Naive thymus-derived CD4-positive, alpha-beta T cell (primary cell): ENCODE measurements at regions of chr10 and their contacts with region 1.

Region 1: DNA sequence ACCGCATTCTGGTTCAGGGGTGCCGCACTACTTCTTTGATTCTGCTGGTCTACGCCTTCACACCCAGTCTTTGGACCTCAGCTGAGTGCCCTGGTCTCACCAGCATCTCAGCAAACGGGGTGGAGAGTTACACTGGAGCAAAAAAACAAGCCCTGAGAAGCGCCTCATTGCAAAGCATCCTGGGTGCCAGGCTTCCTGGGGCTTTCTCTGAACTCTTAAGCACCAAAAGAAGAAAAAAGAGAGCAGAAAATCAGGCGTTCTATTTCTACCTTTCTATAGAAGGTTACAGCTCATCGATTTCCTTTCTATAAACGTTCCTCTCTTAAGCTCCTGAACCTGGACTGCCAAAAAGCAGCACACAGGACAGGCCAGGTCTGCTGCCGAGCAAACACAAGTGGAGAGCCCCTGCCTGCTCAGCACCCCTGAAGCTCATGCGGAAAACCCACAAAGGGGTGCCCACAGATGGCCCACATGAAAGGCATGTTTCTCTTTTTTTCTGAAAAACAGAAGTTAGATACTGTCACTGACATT is 217.9 kb downstream of the SFMBT2 start:
- DNase-seq: peak; percentile 30 to 85 (median 80)
- ATAC-seq: peak; percentile 95
- H3K4me3 ChIP-seq: peak overlapping the region; percentile 29
- H3K4me3 Mint-ChIP-seq: peak overlapping the region; percentile 67 to 89 (median 87)
- H3K27ac ChIP-seq: peak overlapping the region; percentile 66
- H3K27ac Mint-ChIP-seq: peak overlapping the region; percentile 93 to 98 (median 97)
- H3K4me1 ChIP-seq: peaks cover 24 to 80% of the 10 kb centered on the region in 2 donors
- H3K4me1 Mint-ChIP-seq: peaks cover 46 to 88% (median 75%) of the 10 kb centered on the region in 7 donors
- H3K27me3 ChIP-seq: no peaks in the 10 kb centered on the region
- H3K27me3 Mint-ChIP-seq: no peaks in the 10 kb centered on the region

Region 2: DNA sequence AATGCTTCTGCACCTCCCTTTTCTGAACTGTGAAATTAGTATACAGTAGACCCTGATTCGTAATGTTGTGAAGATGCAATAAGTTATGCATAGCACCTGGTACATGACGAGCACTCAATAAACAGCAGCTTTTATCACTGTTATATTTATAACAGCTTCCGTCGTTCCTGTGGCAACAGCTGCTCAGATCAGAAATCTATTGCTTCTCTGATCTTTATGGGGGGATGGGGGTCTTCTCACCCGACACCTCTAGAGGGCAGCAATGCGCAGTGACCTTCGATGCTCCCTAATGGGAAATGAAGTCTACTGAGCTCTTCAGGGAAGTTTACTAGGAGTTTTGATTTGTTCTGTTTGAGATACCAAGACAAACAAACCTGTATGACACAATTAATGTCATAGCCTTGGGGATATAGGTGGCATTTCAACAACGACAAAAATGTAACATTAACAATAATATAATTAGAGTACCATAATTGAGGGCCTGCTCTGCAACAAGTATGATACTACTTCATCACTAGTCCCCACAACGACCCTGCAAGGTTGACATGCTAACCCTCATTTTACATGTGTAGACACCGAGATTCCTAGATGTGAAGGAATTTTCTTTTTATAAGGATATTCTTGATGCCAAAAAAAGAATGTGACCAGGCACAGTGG is 71.6 kb before region 1 on chr10:
- CTCF ChIA-PET with region 1: interaction called, 6 read pairs
- POLR2A ChIA-PET with region 1: no interaction called
- intact Hi-C with region 1: loop called (anchors 1 kb)
- DNase-seq: peak; percentile 54 to 86 (median 79)
- ATAC-seq: peak; percentile 97
- H3K4me3 ChIP-seq: no peak overlapping the region
- H3K4me3 Mint-ChIP-seq: peak overlapping the region in 1 of 10 donors; percentile 42
- H3K27ac ChIP-seq: no peak overlapping the region
- H3K27ac Mint-ChIP-seq: peak overlapping the region; percentile 36 to 97 (median 85)
- H3K4me1 ChIP-seq: no peaks in the 10 kb centered on the region
- H3K4me1 Mint-ChIP-seq: peaks cover 6 to 13% (median 8%) of the 10 kb centered on the region in 7 donors
- H3K27me3 ChIP-seq: no peaks in the 10 kb centered on the region
- H3K27me3 Mint-ChIP-seq: peaks cover 0 to 44% (median 0%) of the 10 kb centered on the region in 5 donors

Region 3: GRCh38 chr10:7173948-7174347 is 18.9 kb before region 1 on chr10:
- CTCF ChIA-PET with region 1: no interaction called
- POLR2A ChIA-PET with region 1: no interaction called
- intact Hi-C with region 1: no loop called
- DNase-seq: no peak
- ATAC-seq: no peak
- H3K4me3 ChIP-seq: no peak overlapping the region
- H3K4me3 Mint-ChIP-seq: no peak overlapping the region
- H3K27ac ChIP-seq: no peak overlapping the region
- H3K27ac Mint-ChIP-seq: no peak overlapping the region
- H3K4me1 ChIP-seq: no peaks in the 10 kb centered on the region
- H3K4me1 Mint-ChIP-seq: peaks cover 0 to 4% (median 0%) of the 10 kb centered on the region in 7 donors
- H3K27me3 ChIP-seq: no peaks in the 10 kb centered on the region
- H3K27me3 Mint-ChIP-seq: no peaks in the 10 kb centered on the region

Region 4: GRCh38 chr10:7205656-7206055 is 12.8 kb after region 1 on chr10:
- CTCF ChIA-PET with region 1: no interaction called
- POLR2A ChIA-PET with region 1: no interaction called
- intact Hi-C with region 1: loop called in 1 of 2 experiments (anchors 2 kb)
- DNase-seq: no peak
- ATAC-seq: no peak
- H3K4me3 ChIP-seq: no peak overlapping the region
- H3K4me3 Mint-ChIP-seq: no peak overlapping the region
- H3K27ac ChIP-seq: no peak overlapping the region
- H3K27ac Mint-ChIP-seq: peak overlapping the region in 4 of 9 donors; percentile 1 to 62 (median 32)
- H3K4me1 ChIP-seq: no peaks in the 10 kb centered on the region
- H3K4me1 Mint-ChIP-seq: peaks cover 3 to 10% (median 5%) of the 10 kb centered on the region in 7 donors
- H3K27me3 ChIP-seq: no peaks in the 10 kb centered on the region
- H3K27me3 Mint-ChIP-seq: no peaks in the 10 kb centered on the region

Region 5: DNA sequence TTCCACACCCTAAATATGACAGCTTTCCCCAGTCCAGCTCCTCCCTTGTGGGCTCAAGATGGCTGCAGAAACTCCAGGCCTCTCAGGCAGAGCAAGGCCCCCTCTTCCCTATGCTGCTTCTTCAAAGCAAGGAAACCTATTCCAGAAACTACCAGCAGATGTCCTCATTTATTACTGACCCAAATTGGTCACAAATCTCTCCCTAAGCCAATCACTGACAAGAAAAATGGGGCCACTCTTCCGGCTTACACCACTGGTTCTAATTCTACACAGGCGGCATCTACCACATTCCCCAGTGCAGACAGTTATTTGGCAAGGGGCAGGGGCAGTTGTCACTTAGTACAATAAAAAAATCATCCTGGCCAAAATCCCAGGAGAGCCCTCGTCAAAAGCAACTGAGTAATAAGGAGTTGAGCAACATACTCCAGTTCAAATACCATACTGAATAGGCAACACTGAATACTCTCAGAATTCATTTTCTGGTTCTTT is 67.6 kb after region 1 on chr10:
- CTCF ChIA-PET with region 1: interaction called, 3 read pairs
- POLR2A ChIA-PET with region 1: interaction called, 4 read pairs
- intact Hi-C with region 1: loop called (anchors 2 kb)
- DNase-seq: peak in 3 of 9 donors; percentile 16 to 33 (median 31)
- ATAC-seq: peak; percentile 73
- H3K4me3 ChIP-seq: no peak overlapping the region
- H3K4me3 Mint-ChIP-seq: peak overlapping the region in 8 of 10 donors; percentile 29 to 75 (median 61)
- H3K27ac ChIP-seq: no peak overlapping the region
- H3K27ac Mint-ChIP-seq: peak overlapping the region; percentile 51 to 94 (median 86)
- H3K4me1 ChIP-seq: peaks cover 27 to 30% of the 10 kb centered on the region in 2 donors
- H3K4me1 Mint-ChIP-seq: peaks cover 42 to 64% (median 57%) of the 10 kb centered on the region in 7 donors
- H3K27me3 ChIP-seq: no peaks in the 10 kb centered on the region
- H3K27me3 Mint-ChIP-seq: no peaks in the 10 kb centered on the region

Region 6: DNA sequence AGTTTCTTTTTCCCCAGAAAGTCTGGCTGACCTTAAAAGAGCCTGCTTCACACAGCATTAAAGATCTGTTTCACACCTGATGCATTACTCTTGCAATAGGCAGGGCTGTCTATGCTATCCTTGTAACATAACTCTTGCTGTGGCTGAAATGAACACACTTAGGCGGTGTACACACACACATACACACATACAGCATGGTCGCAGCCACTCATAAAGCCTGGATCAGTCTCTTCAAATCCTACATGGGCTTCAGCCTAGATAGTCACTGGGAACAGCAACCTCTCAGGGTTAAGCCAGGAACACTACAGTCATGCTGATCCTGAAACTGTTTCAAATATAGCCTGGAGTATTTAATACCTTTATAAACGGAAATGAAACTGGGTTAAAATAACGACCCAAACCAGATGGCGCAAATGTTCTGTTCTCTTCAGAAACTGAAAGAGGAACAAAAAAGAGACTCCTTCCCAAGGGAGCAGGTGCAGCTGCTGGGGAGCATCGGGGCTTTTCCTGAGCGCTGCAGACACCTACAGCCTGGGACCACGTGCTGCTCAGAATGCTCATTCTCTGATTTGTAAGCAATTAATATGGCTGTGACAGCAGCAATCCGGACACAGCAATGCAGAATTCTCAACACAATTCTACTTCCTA is 278.9 kb after region 1 on chr10:
- CTCF ChIA-PET with region 1: no interaction called
- POLR2A ChIA-PET with region 1: no interaction called
- intact Hi-C with region 1: loop called in 1 of 2 experiments (anchors 10 kb)
- DNase-seq: peak in 4 of 9 donors; percentile 6 to 19 (median 10)
- ATAC-seq: peak; percentile 72
- H3K4me3 ChIP-seq: peak overlapping the region; percentile 62
- H3K4me3 Mint-ChIP-seq: peak overlapping the region; percentile 73 to 93 (median 88)
- H3K27ac ChIP-seq: peak overlapping the region; percentile 51
- H3K27ac Mint-ChIP-seq: peak overlapping the region in 8 of 9 donors; percentile 72 to 91 (median 85)
- H3K4me1 ChIP-seq: peaks cover 10 to 19% of the 10 kb centered on the region in 2 donors
- H3K4me1 Mint-ChIP-seq: peaks cover 23 to 55% (median 36%) of the 10 kb centered on the region in 7 donors
- H3K27me3 ChIP-seq: no peaks in the 10 kb centered on the region
- H3K27me3 Mint-ChIP-seq: peaks cover 0 to 2% (median 0%) of the 10 kb centered on the region in 5 donors